Ovary (tissue), 10 donors: ENCODE measurements at regions of chr6 and their contacts with region 1.

Region 1: GRCh38 chr6:153595903-153596302 is 443.1 kb upstream of the OPRM1 start:
- DNase-seq: no peak
- H3K4me3 ChIP-seq: no peak overlapping the region
- H3K27ac ChIP-seq: no peak overlapping the region
- H3K4me1 ChIP-seq: no peaks in the 10 kb centered on the region
- H3K27me3 ChIP-seq: no peaks in the 10 kb centered on the region
- CTCF ChIP-seq: no peak
- EP300 ChIP-seq: no peak
- POLR2A ChIP-seq: no peak

Region 2: DNA sequence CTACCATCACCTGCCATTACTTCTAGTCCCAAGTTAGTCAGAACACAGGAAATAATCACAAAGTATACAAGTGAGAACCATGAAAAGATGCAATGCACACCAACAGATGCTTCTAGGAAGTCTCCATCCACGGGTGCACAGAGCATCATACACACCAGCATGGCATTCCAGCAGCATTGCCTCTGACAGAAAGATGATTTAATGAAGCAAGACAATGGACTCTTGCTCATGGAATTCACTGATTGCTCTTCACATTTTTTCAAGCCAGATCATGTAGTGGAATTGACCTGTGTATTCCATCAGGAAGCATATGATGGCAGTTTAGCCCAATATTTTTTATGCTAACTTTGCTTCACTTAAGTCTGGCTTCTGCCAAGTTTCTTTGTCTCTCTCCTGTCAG is 58.5 kb before region 1 on chr6:
- intact Hi-C with region 1: loop called in 1 of 4 experiments (anchors 10 kb)
- DNase-seq: no peak
- H3K4me3 ChIP-seq: no peak overlapping the region
- H3K27ac ChIP-seq: no peak overlapping the region
- H3K4me1 ChIP-seq: no peaks in the 10 kb centered on the region
- H3K27me3 ChIP-seq: no peaks in the 10 kb centered on the region
- CTCF ChIP-seq: no peak
- EP300 ChIP-seq: no peak
- POLR2A ChIP-seq: no peak

Region 3: GRCh38 chr6:153644000-153644399 is 48.1 kb after region 1 on chr6:
- intact Hi-C with region 1: no loop called
- DNase-seq: no peak
- H3K4me3 ChIP-seq: no peak overlapping the region
- H3K27ac ChIP-seq: no peak overlapping the region
- H3K4me1 ChIP-seq: no peaks in the 10 kb centered on the region
- H3K27me3 ChIP-seq: no peaks in the 10 kb centered on the region
- CTCF ChIP-seq: no peak
- EP300 ChIP-seq: no peak
- POLR2A ChIP-seq: no peak

Region 4: DNA sequence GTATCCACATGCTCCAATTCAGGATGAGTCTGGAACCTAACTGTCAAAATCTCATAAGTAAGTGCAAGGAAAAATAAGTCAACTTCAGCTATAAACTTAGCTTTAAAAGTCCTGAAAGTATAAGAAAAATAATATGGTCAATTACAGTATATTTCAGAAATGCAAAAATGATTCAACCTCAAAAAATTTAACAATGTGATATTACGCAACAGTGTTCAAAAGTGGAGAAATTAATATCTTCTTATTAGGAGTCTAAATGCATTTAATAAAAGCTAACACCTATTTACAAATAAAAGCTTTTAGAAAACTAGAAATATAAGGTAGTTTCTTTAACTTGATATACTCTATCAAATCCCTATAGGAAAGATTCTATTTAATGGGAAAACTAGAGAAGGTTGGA is 332.0 kb after region 1 on chr6:
- intact Hi-C with region 1: no loop called
- DNase-seq: no peak
- H3K4me3 ChIP-seq: no peak overlapping the region
- H3K27ac ChIP-seq: no peak overlapping the region
- H3K4me1 ChIP-seq: no peaks in the 10 kb centered on the region
- H3K27me3 ChIP-seq: no peaks in the 10 kb centered on the region
- CTCF ChIP-seq: no peak
- EP300 ChIP-seq: no peak
- POLR2A ChIP-seq: no peak

Region 5: GRCh38 chr6:154156135-154156896 is 560.4 kb after region 1 on chr6:
- intact Hi-C with region 1: no loop called
- DNase-seq: peak in 1 of 5 donors; percentile 27
- H3K4me3 ChIP-seq: no peak overlapping the region
- H3K27ac ChIP-seq: peak overlapping the region in 1 of 2 donors; percentile 54
- H3K4me1 ChIP-seq: peaks cover 1% of the 10 kb centered on the region
- H3K27me3 ChIP-seq: no peaks in the 10 kb centered on the region
- CTCF ChIP-seq: no peak
- EP300 ChIP-seq: no peak
- POLR2A ChIP-seq: no peak